Gastrocnemius medialis (tissue), 4 donors: ENCODE measurements at regions of chr1 and their contacts with region 1.

Region 1: GRCh38 chr1:230208619-230209261 is 141.7 kb downstream of the GALNT2 start:
- DNase-seq: peak; percentile 67 to 76
- ATAC-seq: peak; percentile 83 to 87
- H3K4me3 ChIP-seq: no peak overlapping the region
- H3K27ac ChIP-seq: peak overlapping the region; percentile 85 to 92 (median 88)
- H3K4me1 ChIP-seq: peaks cover 74 to 89% of the 10 kb centered on the region in 2 donors
- H3K27me3 ChIP-seq: no peaks in the 10 kb centered on the region
- CTCF ChIP-seq: peak in 1 of 5 experiments; percentile 16
- POLR2A ChIP-seq: peak; percentile 40 to 71

Region 2: GRCh38 chr1:230163205-230163604 is 45.5 kb before region 1 on chr1:
- in situ Hi-C with region 1: no loop called
- intact Hi-C with region 1: loop called (anchors 2 kb)
- DNase-seq: peak; percentile 61 to 81
- ATAC-seq: peak; percentile 62 to 64
- H3K4me3 ChIP-seq: no peak overlapping the region
- H3K27ac ChIP-seq: peak overlapping the region; percentile 81 to 91 (median 82)
- H3K4me1 ChIP-seq: peaks cover 68 to 80% of the 10 kb centered on the region in 2 donors
- H3K27me3 ChIP-seq: no peaks in the 10 kb centered on the region
- CTCF ChIP-seq: no peak
- POLR2A ChIP-seq: no peak

Region 3: GRCh38 chr1:230407351-230407750 is 198.6 kb after region 1 on chr1:
- in situ Hi-C with region 1: no loop called
- intact Hi-C with region 1: no loop called
- DNase-seq: no peak
- ATAC-seq: no peak
- H3K4me3 ChIP-seq: no peak overlapping the region
- H3K27ac ChIP-seq: no peak overlapping the region
- H3K4me1 ChIP-seq: no peaks in the 10 kb centered on the region
- H3K27me3 ChIP-seq: no peaks in the 10 kb centered on the region
- CTCF ChIP-seq: no peak
- POLR2A ChIP-seq: no peak

Region 4: DNA sequence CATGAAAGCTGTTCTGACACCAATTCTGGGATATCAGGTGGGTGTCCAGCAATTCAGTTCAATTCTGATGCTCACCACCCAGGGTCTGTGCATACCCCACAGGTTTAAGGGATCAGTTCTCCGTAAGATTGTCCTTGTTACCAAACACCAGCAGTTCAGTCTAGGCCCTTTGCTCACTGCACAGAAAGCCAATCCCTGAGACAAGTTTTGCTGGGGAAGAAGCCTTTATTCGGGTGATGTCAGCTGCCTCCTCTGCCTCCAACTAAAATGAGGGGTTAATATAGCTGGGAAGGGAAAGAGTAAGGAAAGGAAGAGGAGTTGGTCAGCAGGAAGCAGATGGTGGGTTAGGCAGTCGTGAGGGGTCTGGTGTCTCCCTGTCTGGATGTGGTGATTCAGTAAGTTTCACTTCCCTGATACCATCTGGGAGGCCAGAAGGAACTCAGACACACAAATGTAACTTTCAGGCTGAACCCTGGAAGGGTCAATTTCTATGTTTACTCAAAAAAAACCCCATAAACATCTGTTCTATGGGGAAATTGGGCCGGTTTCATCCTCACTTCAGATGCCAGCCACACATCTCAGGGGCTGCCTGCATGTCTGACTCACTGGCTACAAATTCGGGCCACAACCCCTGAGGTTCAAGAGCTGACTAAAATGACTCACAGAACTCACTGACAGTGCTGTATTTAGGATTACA is 300.7 kb after region 1 on chr1:
- in situ Hi-C with region 1: no loop called
- intact Hi-C with region 1: no loop called
- DNase-seq: no peak
- ATAC-seq: no peak
- H3K4me3 ChIP-seq: no peak overlapping the region
- H3K27ac ChIP-seq: no peak overlapping the region
- H3K4me1 ChIP-seq: no peaks in the 10 kb centered on the region
- H3K27me3 ChIP-seq: no peaks in the 10 kb centered on the region
- CTCF ChIP-seq: no peak
- POLR2A ChIP-seq: no peak